Activated CD4-positive, alpha-beta memory T cell treated with anti-CD3 and anti-CD28 coated beads for 36 hours (primary cell): ENCODE measurements at regions of chr7 and their contacts with region 1.

Region 1: GRCh38 chr7:107150375-107151073 is 18.3 kb upstream of the HBP1 start:
- DNase-seq: peak; percentile 81
- H3K4me3 Mint-ChIP-seq: no peak overlapping the region
- H3K27ac Mint-ChIP-seq: no peak overlapping the region
- H3K4me1 Mint-ChIP-seq: peaks cover 6% of the 10 kb centered on the region
- H3K27me3 Mint-ChIP-seq: no peaks in the 10 kb centered on the region

Region 2: GRCh38 chr7:106793015-106793975 is 357.2 kb before region 1 on chr7:
- CTCF ChIA-PET with region 1: interaction called, 155 read pairs
- POLR2A ChIA-PET with region 1: no interaction called
- intact Hi-C with region 1: loop called (anchors 1 kb)
- DNase-seq: no peak
- H3K4me3 Mint-ChIP-seq: no peak overlapping the region
- H3K27ac Mint-ChIP-seq: no peak overlapping the region
- H3K4me1 Mint-ChIP-seq: no peaks in the 10 kb centered on the region
- H3K27me3 Mint-ChIP-seq: peaks cover 4% of the 10 kb centered on the region

Region 3: GRCh38 chr7:106947244-106947728 is 203.2 kb before region 1 on chr7:
- CTCF ChIA-PET with region 1: interaction called, 45 read pairs
- POLR2A ChIA-PET with region 1: no interaction called
- intact Hi-C with region 1: loop called (anchors 1 kb)
- DNase-seq: peak; percentile 30
- H3K4me3 Mint-ChIP-seq: no peak overlapping the region
- H3K27ac Mint-ChIP-seq: no peak overlapping the region
- H3K4me1 Mint-ChIP-seq: no peaks in the 10 kb centered on the region
- H3K27me3 Mint-ChIP-seq: peaks cover 2% of the 10 kb centered on the region

Region 4: DNA sequence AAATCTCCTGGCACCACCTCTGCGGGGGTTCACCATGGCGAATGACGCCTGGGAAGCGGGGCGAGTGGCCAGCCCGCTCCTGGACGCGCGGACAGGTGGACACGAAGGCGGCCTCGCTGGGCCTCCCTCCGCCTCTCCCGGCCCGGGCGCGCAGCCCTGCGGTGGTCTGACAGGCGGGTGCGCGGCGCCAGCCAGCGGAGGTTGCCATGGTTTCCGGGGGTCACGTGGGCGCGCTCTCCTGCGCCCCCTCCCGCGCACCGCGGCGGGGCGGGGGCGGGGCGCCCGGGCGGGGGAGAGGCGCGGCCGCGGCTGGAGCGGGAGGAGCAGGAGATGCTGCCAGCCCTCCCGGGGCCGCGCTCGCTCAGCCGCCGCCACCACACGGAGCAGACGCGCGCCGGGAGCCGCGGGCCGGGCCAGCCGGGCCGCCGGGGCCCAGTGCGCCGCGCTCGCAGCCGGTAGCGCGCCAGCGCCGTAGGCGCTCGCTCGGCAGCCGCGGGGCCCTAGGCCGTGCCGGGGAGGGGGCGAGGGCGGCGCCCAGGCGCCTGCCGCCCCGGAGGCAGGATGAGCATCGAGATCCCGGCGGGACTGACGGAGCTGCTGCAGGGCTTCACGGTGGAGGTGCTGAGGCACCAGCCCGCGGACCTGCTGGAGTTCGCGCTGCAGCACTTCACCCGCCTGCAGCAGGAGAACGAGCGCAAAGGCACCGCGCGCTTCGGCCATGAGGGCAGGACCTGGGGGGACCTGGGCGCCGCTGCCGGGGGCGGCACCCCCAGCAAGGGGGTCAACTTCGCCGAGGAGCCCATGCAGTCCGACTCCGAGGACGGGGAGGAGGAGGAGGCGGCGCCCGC is 106.0 kb before region 1 on chr7 and contains the start of gene PRKAR2B:
- CTCF ChIA-PET with region 1: interaction called, 3 read pairs
- POLR2A ChIA-PET with region 1: no interaction called
- intact Hi-C with region 1: loop called (anchors 5 kb)
- DNase-seq: peak; percentile 73
- H3K4me3 Mint-ChIP-seq: peak within 1 kb of the TSS; percentile 72
- H3K27ac Mint-ChIP-seq: no peak within 1 kb of the TSS
- H3K4me1 Mint-ChIP-seq: peaks cover 18% of the 10 kb centered on the region
- H3K27me3 Mint-ChIP-seq: peaks cover 39% of the 10 kb centered on the region
- total RNA-seq, gene PRKAR2B: 1.3 to 1.4 TPM

Region 5: DNA sequence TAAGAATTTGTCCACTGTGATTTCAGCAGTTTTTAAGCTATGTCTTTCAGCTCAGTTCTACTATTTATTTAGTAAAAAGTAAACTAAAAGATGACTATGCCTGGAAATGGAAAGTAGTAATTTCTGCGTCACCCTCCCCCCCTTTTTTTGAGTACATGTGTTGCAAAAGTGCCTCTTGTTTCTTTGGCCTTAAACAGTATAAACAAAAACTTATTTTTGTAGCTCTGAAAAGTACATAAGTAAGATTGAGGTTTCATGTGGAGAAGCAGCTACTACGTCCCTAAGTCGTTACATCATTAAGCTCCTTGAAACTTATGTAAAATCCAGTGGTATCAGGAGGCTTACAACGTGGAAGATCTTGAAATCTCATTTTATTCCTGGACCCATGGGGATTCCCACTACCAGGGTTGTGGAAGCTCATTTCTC is 28.0 kb before region 1 on chr7:
- CTCF ChIA-PET with region 1: interaction called, 16 read pairs
- POLR2A ChIA-PET with region 1: interaction called, 3 read pairs
- intact Hi-C with region 1: no loop called
- DNase-seq: no peak
- H3K4me3 Mint-ChIP-seq: no peak overlapping the region
- H3K27ac Mint-ChIP-seq: no peak overlapping the region
- H3K4me1 Mint-ChIP-seq: peaks cover 17% of the 10 kb centered on the region
- H3K27me3 Mint-ChIP-seq: no peaks in the 10 kb centered on the region

Region 6: DNA sequence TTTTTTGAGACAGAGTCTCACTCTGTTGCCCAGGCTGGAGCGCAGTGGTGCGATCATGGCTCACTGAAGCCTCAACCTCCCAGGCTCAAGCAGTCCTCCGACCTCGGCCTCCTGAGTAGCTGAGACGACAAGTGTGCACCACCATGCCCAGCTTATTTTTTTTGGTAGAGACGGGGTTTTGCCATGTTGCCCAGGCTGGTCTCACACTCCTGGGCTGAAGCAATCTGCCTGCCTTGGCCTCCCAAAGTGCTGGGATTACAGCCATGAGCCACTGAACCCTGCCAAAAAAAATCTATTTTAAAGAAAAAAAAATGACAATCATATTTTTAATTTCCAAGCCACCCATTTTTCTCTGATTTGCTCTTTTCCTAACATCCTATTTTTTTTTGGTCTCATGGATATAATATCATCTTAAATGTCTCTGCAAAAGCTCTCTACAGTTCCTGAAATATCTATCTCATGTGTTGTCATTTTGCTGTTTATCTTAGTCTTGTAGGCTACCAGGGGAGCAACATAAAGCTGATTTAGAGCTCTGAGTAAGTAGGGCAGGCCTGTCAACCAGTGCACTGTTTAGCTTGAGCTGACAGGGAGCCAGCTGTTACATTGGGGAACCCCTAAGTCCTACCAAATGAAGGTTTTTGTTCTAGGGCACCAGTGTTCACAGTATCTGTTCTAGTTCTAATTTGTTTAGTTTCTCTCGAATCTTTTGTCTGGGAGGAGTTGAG is 11.7 kb before region 1 on chr7:
- CTCF ChIA-PET with region 1: interaction called, 28 read pairs
- POLR2A ChIA-PET with region 1: no interaction called
- intact Hi-C with region 1: no loop called
- DNase-seq: no peak
- H3K4me3 Mint-ChIP-seq: no peak overlapping the region
- H3K27ac Mint-ChIP-seq: no peak overlapping the region
- H3K4me1 Mint-ChIP-seq: no peaks in the 10 kb centered on the region
- H3K27me3 Mint-ChIP-seq: no peaks in the 10 kb centered on the region

Region 7: GRCh38 chr7:107173691-107174406 is 23.3 kb after region 1 on chr7:
- CTCF ChIA-PET with region 1: interaction called, 36 read pairs
- POLR2A ChIA-PET with region 1: interaction called, 5 read pairs
- intact Hi-C with region 1: no loop called
- DNase-seq: peak; percentile 47
- H3K4me3 Mint-ChIP-seq: peak overlapping the region; percentile 12
- H3K27ac Mint-ChIP-seq: peak overlapping the region; percentile 55
- H3K4me1 Mint-ChIP-seq: peaks cover 58% of the 10 kb centered on the region
- H3K27me3 Mint-ChIP-seq: no peaks in the 10 kb centered on the region